ENCODE measurements at regions of chr1 and their contacts with region 1.

Region 1: DNA sequence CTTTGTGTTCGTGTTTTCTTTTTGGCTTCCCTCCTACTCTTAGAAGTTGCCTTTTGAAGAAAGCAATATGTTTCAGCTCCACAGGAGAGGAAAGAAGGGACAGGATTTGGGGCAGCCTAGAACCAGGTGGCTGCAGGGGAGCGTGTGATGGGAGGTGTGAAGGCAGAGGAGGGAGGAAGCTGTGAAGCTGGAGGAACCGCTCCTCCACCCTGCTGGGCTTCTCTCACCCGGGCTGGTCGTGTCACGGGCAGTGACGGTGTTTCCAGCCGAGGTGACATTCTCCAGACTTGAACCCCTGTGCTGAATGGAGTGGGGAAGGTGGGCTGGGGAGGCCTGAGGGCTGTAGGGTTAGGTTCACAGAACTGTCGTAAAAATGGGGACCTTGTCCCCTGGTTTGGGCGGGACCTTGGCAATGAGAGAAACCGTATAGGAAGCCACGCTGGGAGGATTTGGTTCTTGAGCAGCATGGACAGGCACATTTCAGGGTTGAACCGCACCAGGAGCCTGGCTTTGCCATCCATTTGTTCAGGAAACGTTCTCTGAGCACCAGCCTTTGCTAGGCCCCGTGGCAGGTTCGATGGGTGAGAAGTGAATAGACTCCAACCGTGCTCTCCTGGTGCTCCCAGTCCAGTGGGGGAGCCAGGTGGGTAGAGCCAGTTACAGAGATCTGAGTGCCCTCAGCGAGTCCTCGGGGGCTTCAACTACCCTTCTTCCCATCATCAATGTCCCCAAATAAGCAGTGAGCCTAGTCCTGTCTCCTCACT is 103.0 kb downstream of the PRDM2 start:
- DNase-seq: no peak
- H3K4me3 ChIP-seq: no peak overlapping the region
- H3K27me3 ChIP-seq: no peaks in the 10 kb centered on the region
- CTCF ChIP-seq: no peak

Region 2: DNA sequence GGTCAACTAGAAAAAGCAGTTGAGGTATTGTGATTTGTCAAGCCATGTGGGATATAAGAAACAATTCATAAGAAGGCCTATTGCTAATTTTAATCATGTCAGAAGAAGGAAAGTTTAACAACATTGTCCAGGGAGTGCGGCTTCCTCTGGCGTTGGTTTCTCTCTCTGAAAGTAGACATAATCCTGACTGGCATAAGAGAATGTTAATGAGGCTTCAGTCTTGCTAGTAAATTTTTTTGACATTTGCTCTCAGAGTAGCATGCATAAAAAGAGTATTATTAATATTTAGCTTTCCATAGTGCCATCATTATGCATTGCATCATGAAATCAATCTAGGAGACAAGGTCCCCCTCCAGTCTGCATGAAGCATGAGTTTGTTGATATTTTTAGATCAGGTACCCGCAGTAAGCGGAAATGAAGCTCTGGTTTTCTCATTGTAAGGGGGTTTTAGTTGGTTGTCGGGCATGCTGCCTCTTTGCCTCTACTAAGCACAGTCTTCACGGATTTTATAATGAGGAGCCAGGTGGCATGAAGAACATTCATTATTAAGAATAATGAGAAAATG is 115.7 kb before region 1 on chr1:
- CTCF ChIA-PET with region 1: no interaction called
- POLR2A ChIA-PET with region 1: no interaction called
- DNase-seq: no peak
- H3K4me3 ChIP-seq: no peak overlapping the region
- H3K27me3 ChIP-seq: no peaks in the 10 kb centered on the region
- CTCF ChIP-seq: no peak

Region 3: GRCh38 chr1:13813398-13814012 is 10.5 kb after region 1 on chr1:
- CTCF ChIA-PET with region 1: interaction called, 13 read pairs
- POLR2A ChIA-PET with region 1: no interaction called
- DNase-seq: no peak
- H3K4me3 ChIP-seq: no peak overlapping the region
- H3K27me3 ChIP-seq: no peaks in the 10 kb centered on the region
- CTCF ChIP-seq: peak; percentile 74

Measured in BJ (cell line).